ENCODE measurements at regions of chr1 and their contacts with region 1.

Region 1: DNA sequence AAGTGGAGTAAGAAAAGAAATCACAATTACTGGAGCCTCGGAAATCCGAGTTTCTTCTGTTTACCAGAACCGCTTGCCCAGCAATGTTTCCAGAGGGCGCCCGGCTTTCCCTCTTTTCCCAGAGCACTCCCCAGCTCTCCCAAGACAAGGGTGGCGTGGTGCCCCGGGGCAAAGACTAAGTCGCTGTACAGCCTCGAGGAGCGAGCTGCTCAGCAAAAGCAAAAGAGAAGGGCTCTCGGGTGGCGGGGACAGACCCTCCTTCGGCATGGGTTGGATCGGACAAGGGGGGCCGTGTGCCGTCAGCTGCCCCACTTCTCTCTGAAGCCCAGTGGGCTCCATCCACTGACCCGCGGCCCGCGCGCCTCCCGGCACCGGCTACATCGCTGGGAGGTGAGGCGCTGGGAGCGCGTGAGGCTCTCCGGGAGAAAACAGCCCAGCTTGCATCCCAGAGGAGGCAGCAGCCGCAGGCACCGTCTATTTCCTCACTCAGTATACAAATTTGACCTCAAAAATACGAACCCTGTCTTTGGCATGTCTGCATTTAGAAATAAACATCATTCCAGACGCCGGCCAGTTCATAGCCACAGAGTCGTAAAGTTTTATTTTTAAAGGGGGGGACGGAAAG is 922 bp upstream of the GPR137B start:
- DNase-seq: no peak
- H3K4me3 ChIP-seq: peak overlapping the region; percentile 62
- H3K27ac ChIP-seq: no peak overlapping the region
- H3K4me1 ChIP-seq: no peaks in the 10 kb centered on the region
- H3K27me3 ChIP-seq: no peaks in the 10 kb centered on the region
- CTCF ChIP-seq: no peak

Region 2: DNA sequence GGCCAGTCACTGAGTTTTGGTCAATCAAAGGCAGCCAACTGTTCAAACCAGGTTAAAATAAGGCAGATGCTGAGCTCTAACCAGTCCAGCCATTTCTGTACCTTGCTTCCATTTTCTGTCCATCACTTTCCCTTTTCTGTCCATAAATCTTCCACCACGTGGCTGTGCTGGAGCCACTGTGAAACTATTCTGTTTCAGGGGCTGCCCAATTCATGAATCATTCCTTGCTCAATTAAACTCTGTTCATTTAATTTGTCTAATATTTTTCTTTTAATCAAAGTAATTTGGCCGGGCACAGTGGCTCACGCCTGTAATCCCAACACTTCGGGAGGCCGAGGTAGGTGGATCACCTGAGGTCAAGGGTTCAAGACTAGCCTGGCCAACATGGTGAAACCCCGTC is 359.7 kb after region 1 on chr1:
- CTCF ChIA-PET with region 1: no interaction called
- POLR2A ChIA-PET with region 1: interaction called, 14 read pairs
- intact Hi-C with region 1: no loop called
- DNase-seq: no peak
- H3K4me3 ChIP-seq: no peak overlapping the region
- H3K27ac ChIP-seq: no peak overlapping the region
- H3K4me1 ChIP-seq: peaks cover 11% of the 10 kb centered on the region
- H3K27me3 ChIP-seq: no peaks in the 10 kb centered on the region
- CTCF ChIP-seq: no peak

Measured in A673 (cell line).